ENCODE measurements at regions of chr3 and their contacts with region 1.

Region 1: DNA sequence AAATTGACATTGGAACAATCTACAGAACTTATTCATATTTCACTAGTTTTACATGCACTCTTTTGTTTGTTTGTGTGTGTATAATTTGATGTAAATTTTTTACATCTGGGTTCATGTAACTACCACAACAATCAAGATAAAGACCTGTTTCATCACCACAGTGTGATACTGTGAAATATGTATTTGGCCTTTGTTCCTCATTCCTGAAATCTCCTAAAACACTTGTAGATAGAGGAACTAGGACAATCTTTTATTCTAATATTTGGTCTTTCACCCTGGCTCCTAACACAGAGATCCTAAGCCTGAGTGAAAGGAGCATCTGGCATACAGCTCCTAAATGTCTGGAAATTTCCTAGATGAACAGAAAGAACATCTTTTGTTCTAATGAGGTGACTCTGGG is 155.0 kb upstream of the GPR149 start:
- DNase-seq: no peak
- ATAC-seq: no peak
- H3K4me3 ChIP-seq: no peak overlapping the region
- H3K27ac ChIP-seq: no peak overlapping the region
- H3K4me1 ChIP-seq: no peaks in the 10 kb centered on the region
- H3K27me3 ChIP-seq: no peaks in the 10 kb centered on the region
- CTCF ChIP-seq: no peak
- EP300 ChIP-seq: no peak
- POLR2A ChIP-seq: no peak
- RAD21 ChIP-seq: no peak

Region 2: DNA sequence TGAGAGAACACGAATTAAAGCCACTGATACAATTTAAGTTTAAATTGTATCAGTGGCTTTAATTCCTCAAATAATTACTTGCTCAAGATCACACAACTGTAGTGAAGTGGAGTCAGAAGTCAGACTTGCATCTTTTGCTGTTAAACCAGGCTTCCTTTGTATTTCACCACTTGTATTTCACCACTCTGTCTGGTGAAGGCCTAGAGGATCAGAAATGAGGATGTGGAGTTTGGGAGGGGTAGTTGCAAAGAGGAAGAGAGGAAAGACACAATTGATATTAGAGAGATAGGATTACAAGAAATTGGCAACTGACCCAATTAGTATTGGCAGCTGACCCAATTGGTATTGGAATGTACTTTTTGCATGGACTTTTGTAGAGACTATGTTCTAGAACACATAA is 133.1 kb after region 1 on chr3:
- CTCF ChIA-PET with region 1: no interaction called
- POLR2A ChIA-PET with region 1: no interaction called
- in situ Hi-C with region 1: no loop called
- intact Hi-C with region 1: loop called (anchors 10 kb)
- DNase-seq: no peak
- ATAC-seq: no peak
- H3K4me3 ChIP-seq: no peak overlapping the region
- H3K27ac ChIP-seq: no peak overlapping the region
- H3K4me1 ChIP-seq: no peaks in the 10 kb centered on the region
- H3K27me3 ChIP-seq: no peaks in the 10 kb centered on the region
- CTCF ChIP-seq: no peak
- EP300 ChIP-seq: no peak
- POLR2A ChIP-seq: no peak
- RAD21 ChIP-seq: no peak

Region 3: GRCh38 chr3:154852475-154852874 is 267.5 kb after region 1 on chr3:
- CTCF ChIA-PET with region 1: no interaction called
- POLR2A ChIA-PET with region 1: no interaction called
- in situ Hi-C with region 1: no loop called
- intact Hi-C with region 1: no loop called
- DNase-seq: no peak
- ATAC-seq: no peak
- H3K4me3 ChIP-seq: no peak overlapping the region
- H3K27ac ChIP-seq: no peak overlapping the region
- H3K4me1 ChIP-seq: no peaks in the 10 kb centered on the region; a peak in 1 of 5 replicates
- H3K27me3 ChIP-seq: no peaks in the 10 kb centered on the region
- CTCF ChIP-seq: no peak
- EP300 ChIP-seq: no peak
- POLR2A ChIP-seq: no peak
- RAD21 ChIP-seq: no peak

Measured in K562 (cell line).